PC-9 (cell line): ENCODE measurements at regions of chr20 and their contacts with region 1.

Region 1: GRCh38 chr20:22974353-22974752 is 60.8 kb upstream of the SSTR4 start:
- DNase-seq: no peak
- H3K4me3 ChIP-seq: no peak overlapping the region
- H3K27ac ChIP-seq: no peak overlapping the region
- H3K4me1 ChIP-seq: no peaks in the 10 kb centered on the region
- H3K27me3 ChIP-seq: peaks cover 31% of the 10 kb centered on the region
- CTCF ChIP-seq: peak; percentile 77

Region 2: DNA sequence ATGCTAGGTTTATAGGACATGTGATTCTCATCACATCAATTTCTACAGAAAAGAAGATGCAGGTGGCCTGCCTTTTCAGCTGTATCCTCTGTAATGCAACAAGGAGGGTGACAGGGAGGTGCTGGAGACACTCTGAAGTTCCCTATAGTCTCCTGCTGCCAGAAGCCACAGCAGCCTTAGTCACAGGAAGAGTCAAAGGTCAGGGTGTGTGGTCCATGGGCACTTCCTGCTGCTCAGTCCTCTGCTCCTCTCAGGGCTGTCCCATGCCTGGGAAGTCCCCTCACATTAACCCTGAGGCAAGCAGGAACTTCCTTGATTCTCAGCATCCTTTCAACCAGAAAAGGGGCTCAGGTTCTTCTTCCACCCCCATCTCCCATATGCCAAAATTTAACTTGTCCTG is 245.2 kb before region 1 on chr20:
- CTCF ChIA-PET with region 1: no interaction called
- POLR2A ChIA-PET with region 1: no interaction called
- intact Hi-C with region 1: loop called (anchors 10 kb)
- DNase-seq: peak; percentile 32 to 74
- H3K4me3 ChIP-seq: no peak overlapping the region
- H3K27ac ChIP-seq: peak overlapping the region; percentile 36; the same call in 1 of the 2 replicates
- H3K4me1 ChIP-seq: peaks cover 31% of the 10 kb centered on the region
- H3K27me3 ChIP-seq: no peaks in the 10 kb centered on the region
- CTCF ChIP-seq: no peak

Region 3: GRCh38 chr20:23296841-23297701 is 322.7 kb after region 1 on chr20:
- CTCF ChIA-PET with region 1: no interaction called
- POLR2A ChIA-PET with region 1: no interaction called
- intact Hi-C with region 1: no loop called
- DNase-seq: no peak
- H3K4me3 ChIP-seq: no peak overlapping the region
- H3K27ac ChIP-seq: no peak overlapping the region
- H3K4me1 ChIP-seq: no peaks in the 10 kb centered on the region
- H3K27me3 ChIP-seq: peaks cover 24% of the 10 kb centered on the region
- CTCF ChIP-seq: no peak